ENCODE measurements at regions of chr1 and their contacts with region 1.

Region 1: GRCh38 chr1:160951443-160952128 is 3.0 kb downstream of the ITLN2 start:
- DNase-seq: peak; percentile 82
- H3K4me3 ChIP-seq: no peak overlapping the region
- H3K27ac ChIP-seq: no peak overlapping the region
- H3K4me1 ChIP-seq: peaks cover 0 to 9% (median 3%) of the 10 kb centered on the region in 4 donors
- H3K27me3 ChIP-seq: no peaks in the 10 kb centered on the region
- CTCF ChIP-seq: peak; percentile 42 to 76 (median 69)
- EP300 ChIP-seq: no peak
- POLR2A ChIP-seq: no peak

Region 2: DNA sequence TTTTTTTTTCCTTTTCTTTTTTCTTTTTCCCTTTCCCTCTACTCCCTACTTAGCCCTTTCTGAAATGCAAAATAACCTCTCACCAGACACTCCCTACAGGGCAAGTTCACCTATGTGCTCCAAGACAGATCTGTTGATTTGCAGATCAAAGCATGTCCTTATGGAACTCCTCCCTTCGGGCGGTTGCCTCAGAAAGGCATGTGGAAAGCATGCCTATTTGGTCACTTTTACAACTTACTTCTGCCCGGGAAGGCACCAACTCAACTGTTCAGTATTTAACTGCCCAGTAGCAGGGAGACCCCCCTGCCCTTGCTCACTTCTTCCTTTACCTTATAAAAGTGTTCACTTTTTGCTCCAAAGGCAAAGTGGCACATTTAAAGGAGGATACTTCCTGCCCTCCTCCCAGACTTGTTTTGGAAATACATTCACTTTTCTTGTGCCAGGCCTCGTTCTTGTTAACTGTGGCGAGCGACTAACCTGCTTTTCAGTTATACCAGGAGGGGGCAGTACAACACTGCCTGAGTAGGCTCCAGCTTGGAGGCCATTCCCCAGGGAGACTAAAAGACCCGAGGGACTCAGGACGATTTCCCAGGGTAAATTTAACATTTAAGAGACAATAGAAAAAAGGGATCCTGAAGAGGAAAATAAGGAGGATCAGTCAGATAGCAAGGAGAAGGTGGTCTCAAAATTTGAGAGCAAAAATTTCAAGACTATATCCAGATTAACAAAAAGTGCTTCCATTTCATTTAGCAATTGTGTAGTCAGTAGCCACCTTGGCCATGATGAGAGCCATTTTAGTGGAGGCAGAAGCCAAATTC is 224.9 kb before region 1 on chr1:
- in situ Hi-C with region 1: loop called in 2 of 4 experiments (anchors 25 kb)
- intact Hi-C with region 1: no loop called
- DNase-seq: peak; percentile 67
- H3K4me3 ChIP-seq: no peak overlapping the region
- H3K27ac ChIP-seq: peak overlapping the region; percentile 64 to 75 (median 70)
- H3K4me1 ChIP-seq: peaks cover 2 to 16% (median 6%) of the 10 kb centered on the region in 4 donors
- H3K27me3 ChIP-seq: no peaks in the 10 kb centered on the region
- CTCF ChIP-seq: peak; percentile 68 to 93 (median 82)
- EP300 ChIP-seq: no peak
- POLR2A ChIP-seq: no peak

Region 3: GRCh38 chr1:160837558-160838205 is 113.9 kb before region 1 on chr1:
- in situ Hi-C with region 1: loop called in 3 of 4 experiments (anchors 5 kb)
- intact Hi-C with region 1: loop called (anchors 10 kb)
- DNase-seq: peak; percentile 68
- H3K4me3 ChIP-seq: no peak overlapping the region
- H3K27ac ChIP-seq: peak overlapping the region in 3 of 4 donors; percentile 26 to 71 (median 54)
- H3K4me1 ChIP-seq: peaks cover 0 to 16% (median 3%) of the 10 kb centered on the region in 4 donors
- H3K27me3 ChIP-seq: no peaks in the 10 kb centered on the region
- CTCF ChIP-seq: peak in 1 of 5 experiments; percentile 15
- EP300 ChIP-seq: no peak
- POLR2A ChIP-seq: no peak